ENCODE measurements at regions of chr4 and their contacts with region 1.

Region 1: DNA sequence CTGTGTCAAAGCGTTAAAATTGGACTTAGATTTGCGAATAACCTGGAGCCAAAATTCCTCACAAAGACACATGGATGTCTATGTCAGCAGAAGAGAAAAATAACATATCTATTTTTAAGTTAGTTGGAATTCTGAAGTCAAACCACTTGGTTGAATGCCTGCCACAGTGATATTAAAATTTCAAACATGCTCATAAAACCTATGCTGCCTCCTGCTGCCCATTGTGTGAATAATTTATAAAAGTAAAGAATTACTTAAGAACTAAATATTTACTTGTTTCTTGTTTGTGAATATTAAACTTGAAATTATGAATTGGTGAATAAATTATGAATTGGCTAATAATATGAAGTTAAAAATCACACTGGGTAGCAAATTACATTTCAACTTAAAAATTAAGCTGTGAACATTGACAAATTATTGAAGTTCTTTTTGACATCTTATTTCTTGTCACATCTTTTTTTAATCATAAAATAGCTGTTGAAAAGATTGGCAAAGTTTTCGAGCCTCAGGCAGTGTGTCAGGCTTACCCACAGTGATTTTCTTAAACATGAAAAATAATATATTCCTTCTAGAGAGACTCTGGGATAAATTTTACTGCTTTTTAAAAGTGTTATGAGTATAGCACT is 35.4 kb downstream of the FABP2 start:
- DNase-seq: no peak
- H3K4me3 ChIP-seq: no peak overlapping the region
- H3K27ac ChIP-seq: peak overlapping the region in 1 of 59 donors; percentile 30
- H3K27me3 ChIP-seq: no peaks in the 10 kb centered on the region
- CTCF ChIP-seq: peak; percentile 46 to 82 (median 67)

Region 2: GRCh38 chr4:118586357-118586790 is 700.1 kb before region 1 on chr4:
- intact Hi-C with region 1: no loop called
- DNase-seq: no peak
- H3K4me3 ChIP-seq: no peak overlapping the region
- H3K27ac ChIP-seq: no peak overlapping the region
- H3K27me3 ChIP-seq: peaks cover 0 to 21% (median 0%) of the 10 kb centered on the region in 45 donors
- CTCF ChIP-seq: no peak

Region 3: DNA sequence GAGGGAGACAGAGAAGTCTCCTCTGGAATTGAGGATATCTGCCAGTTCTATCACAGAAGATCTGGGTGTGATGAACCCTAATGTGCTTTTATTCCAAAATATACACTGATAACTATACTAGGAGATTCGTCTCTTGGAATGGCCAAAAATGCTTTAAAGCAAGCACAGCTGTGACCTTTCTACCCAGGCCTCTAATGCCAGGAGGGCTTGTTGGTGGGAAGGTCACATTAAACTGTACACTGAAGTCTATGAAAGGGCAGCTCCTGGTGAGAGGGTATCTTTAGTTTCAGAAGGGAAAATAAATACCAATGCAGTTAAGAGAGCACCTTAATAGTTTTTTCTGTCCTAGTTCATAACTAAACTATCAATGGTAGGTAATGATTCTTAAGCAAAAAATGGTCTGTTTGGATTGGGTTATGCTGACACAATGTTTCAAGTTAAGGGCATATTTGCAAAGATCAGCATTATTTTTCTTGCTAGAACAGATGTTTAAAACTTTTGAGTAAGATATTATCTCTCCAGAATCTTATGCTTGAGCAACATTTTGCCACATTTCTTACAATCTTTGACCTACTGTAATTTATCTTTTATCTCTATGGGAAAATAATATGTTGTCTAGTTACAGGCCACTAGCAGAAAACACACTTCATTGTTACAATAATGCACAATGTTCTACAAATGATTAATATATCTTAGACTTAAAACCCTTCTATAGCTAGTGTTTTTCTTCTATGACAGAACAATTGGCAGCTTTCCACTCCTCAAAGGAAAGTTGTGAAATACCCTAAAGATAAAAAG is 510.1 kb before region 1 on chr4:
- intact Hi-C with region 1: no loop called
- DNase-seq: no peak
- H3K4me3 ChIP-seq: no peak overlapping the region
- H3K27ac ChIP-seq: no peak overlapping the region
- H3K27me3 ChIP-seq: no peaks in the 10 kb centered on the region
- CTCF ChIP-seq: no peak

Region 4: DNA sequence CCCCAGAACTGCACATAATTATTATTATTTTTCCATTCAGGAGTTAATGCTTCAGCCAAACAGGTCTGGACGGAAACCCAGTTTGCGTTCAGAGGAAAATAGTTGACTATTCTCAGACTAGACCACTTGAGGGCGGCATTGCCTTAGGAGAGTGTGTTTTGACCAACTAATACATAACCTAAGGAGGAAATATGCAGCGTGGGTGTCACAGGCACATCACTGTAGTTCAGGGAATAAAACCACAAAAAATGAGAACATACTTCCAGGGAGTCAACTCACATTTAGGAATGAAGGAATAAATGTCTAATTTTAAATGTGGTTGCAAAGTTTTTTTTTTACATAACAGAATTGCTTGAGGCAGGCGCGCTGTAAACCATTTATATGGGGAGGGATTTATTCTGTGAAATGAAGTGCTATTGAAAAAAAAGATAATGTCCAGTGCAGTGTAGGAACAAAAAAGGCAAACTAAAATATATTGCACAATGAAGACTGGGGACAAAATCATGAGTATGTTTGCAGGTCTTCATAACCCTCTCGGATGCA is 304.6 kb before region 1 on chr4:
- intact Hi-C with region 1: loop called (anchors 5 to 10 kb)
- DNase-seq: peak in 7 of 10 donors; percentile 32 to 73 (median 51)
- H3K4me3 ChIP-seq: peak overlapping the region in 9 of 59 donors; percentile 4 to 37 (median 17)
- H3K27ac ChIP-seq: peak overlapping the region in 6 of 59 donors; percentile 2 to 46 (median 30)
- H3K27me3 ChIP-seq: no peaks in the 10 kb centered on the region
- CTCF ChIP-seq: peak; percentile 61 to 88 (median 75)

Region 5: DNA sequence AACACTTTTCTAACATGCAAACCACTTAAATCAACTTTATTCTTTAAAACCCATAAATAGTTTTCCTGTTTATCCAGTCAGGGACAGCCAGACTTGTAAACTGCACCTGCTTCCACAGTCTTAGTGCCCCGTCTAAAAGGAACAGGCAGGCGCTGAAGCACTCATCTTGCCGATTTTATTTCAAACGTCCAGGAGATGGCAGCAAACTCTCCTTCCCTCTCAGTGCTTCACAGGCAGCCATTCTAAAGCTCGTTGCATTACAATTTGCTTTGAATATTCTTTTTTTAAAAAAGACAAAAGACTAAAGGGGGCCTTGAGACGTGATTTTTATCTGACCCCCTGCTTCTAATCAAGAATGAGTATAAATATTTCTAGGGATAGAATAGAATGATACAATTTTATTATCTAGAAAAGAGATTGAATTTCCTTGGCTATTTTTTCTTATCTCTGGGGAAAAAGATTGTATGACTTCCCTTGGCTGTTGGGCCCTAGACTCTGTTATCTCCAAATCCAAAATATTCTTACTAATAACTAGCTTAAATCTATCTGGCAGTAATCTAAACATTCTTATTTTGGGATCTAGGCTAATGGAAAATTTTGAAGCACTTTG is 244.4 kb before region 1 on chr4:
- intact Hi-C with region 1: loop called in 1 of 2 experiments (anchors 5 kb)
- DNase-seq: peak in 3 of 10 donors; percentile 20 to 68 (median 37)
- H3K4me3 ChIP-seq: peak overlapping the region in 9 of 59 donors; percentile 2 to 31 (median 17)
- H3K27ac ChIP-seq: peak overlapping the region in 39 of 59 donors; percentile 0 to 77 (median 29)
- H3K27me3 ChIP-seq: no peaks in the 10 kb centered on the region
- CTCF ChIP-seq: peak; percentile 40 to 81 (median 69)

Region 6: DNA sequence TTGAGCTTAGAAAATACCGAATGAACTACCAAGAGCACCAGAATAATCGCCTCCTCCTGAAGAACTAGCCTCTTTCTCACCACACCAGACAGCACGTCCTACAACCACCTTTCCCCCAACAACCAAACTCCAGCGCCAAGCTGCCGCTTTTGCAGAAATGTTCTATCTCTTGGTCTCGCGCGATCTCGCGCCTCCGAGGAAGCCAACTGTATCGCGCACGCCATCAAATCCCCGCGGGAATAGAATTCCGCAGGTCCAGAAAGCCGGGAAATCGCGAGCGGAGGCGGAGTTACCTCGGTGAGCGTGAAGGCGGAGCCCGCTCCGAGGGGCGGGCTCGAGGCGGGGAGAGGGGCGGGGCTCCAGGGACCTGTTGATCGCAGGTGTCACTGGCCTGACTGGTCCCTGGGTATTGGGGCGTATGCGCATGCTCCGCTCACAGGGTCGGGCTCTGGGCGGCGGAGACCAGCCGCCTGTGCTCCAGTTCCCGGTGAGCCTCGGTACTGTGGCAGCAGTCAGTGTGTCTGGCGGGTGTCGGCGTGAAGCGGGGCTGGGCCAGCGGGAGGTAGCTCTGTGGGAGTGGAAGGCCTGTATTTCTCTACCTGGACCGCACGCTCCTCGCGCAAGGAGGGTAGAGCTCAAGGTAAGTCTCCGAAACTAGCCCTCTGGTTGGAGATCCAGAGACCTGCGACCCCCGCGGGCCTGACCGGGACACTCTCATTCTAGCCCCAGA is 74.1 kb before region 1 on chr4 and contains the start of gene USP53:
- intact Hi-C with region 1: loop called in 1 of 2 experiments (anchors 10 kb)
- DNase-seq: peak; percentile 76 to 99 (median 94)
- H3K4me3 ChIP-seq: peak within 1 kb of the TSS; percentile 57 to 97 (median 84)
- H3K27ac ChIP-seq: peak within 1 kb of the TSS in 58 of 59 donors; percentile 43 to 98 (median 88)
- H3K27me3 ChIP-seq: no peaks in the 10 kb centered on the region
- CTCF ChIP-seq: peak in 2 of 56 donors; percentile 4 to 7
- total RNA-seq, gene USP53: 11.5 to 44.5 (median 20.5) TPM

Measured in dorsolateral prefrontal cortex (tissue), 120 donors.